ENCODE measurements at regions of chr1 and their contacts with region 1.

Region 1: DNA sequence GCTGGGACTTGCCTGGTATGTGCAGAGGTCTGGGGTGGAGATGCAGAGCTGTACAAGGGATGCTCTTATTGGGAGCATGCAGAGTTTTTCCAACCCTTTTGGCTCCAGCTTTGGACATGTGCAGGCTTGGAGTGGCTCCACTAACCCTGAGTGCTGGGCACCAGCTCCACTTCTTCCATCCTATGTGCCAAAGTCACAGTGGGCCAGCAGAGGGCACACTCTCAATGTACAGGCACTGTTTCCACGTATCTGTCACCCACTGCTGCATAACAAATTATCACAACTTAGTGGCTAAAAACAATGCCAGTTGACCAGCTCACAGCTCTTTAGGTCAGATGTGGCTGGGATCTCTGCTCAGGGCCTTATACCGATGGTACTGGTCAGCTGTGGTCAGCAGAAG is 631.8 kb downstream of the AJAP1 start:
- DNase-seq: no peak
- H3K4me3 ChIP-seq: no peak overlapping the region
- H3K27ac ChIP-seq: no peak overlapping the region
- H3K4me1 ChIP-seq: peaks cover 0 to 16% of the 10 kb centered on the region in 2 experiments; a peak in 1 of 4 replicates
- H3K27me3 ChIP-seq: no peaks in the 10 kb centered on the region
- CTCF ChIP-seq: no peak
- EP300 ChIP-seq: no peak
- RAD21 ChIP-seq: peak; percentile 40; the same call in 1 of the 2 replicates

Region 2: DNA sequence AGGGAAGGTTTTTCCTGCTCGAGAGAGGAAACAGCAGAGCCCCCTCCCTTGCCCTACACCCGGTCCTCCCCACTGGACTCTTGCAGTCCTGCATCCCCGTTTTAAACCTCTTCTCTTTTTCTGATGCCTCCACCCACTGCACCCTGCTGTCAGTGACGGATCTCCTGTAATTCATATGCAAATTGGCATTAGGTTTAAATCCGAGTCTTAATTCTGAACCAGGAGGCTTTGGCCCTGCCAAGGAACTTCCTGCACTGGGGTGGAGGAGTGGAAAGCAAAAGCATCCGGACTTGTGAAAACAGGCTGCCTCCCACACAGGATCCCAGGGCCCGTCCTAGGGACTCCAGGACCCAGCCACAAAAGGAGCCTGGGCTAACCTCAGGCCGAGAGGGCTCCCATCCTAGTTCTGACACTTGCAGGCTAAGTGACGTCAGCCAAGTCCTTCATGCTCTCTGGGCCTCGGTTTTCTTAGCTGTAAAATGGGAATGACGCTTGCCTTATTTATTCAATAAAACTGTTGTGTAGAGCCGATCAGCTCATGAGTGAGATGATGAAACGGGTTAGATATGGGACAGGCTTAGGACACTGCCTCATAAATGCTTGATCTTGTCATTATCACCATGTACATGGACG is 18.5 kb before region 1 on chr1:
- CTCF ChIA-PET with region 1: no interaction called
- POLR2A ChIA-PET with region 1: no interaction called
- DNase-seq: no peak
- H3K4me3 ChIP-seq: no peak overlapping the region
- H3K27ac ChIP-seq: no peak overlapping the region
- H3K4me1 ChIP-seq: no peaks in the 10 kb centered on the region; a peak in 1 of 4 replicates
- H3K27me3 ChIP-seq: no peaks in the 10 kb centered on the region
- CTCF ChIP-seq: no peak
- EP300 ChIP-seq: no peak
- RAD21 ChIP-seq: no peak

Region 3: GRCh38 chr1:5297180-5297885 is 11.1 kb after region 1 on chr1:
- CTCF ChIA-PET with region 1: interaction called, 10 read pairs
- POLR2A ChIA-PET with region 1: interaction called, 4 read pairs
- DNase-seq: peak; percentile 43
- H3K4me3 ChIP-seq: no peak overlapping the region
- H3K27ac ChIP-seq: peak overlapping the region in 1 of 2 experiments; percentile 69; a peak in 1 of 4 replicates
- H3K4me1 ChIP-seq: peaks cover 0 to 27% of the 10 kb centered on the region in 2 experiments; a peak in 1 of 4 replicates
- H3K27me3 ChIP-seq: no peaks in the 10 kb centered on the region
- CTCF ChIP-seq: no peak
- EP300 ChIP-seq: no peak
- RAD21 ChIP-seq: no peak

Region 4: GRCh38 chr1:5620990-5621389 is 334.7 kb after region 1 on chr1:
- CTCF ChIA-PET with region 1: interaction called, 11 read pairs
- POLR2A ChIA-PET with region 1: no interaction called
- DNase-seq: peak; percentile 83
- H3K4me3 ChIP-seq: no peak overlapping the region
- H3K27ac ChIP-seq: no peak overlapping the region
- H3K4me1 ChIP-seq: peaks cover 0 to 8% of the 10 kb centered on the region in 2 experiments; a peak in 1 of 4 replicates
- H3K27me3 ChIP-seq: no peaks in the 10 kb centered on the region
- CTCF ChIP-seq: no peak
- EP300 ChIP-seq: no peak
- RAD21 ChIP-seq: peak; percentile 80